Spleen (tissue), 13 donors: ENCODE measurements at regions of chr11 and their contacts with region 1.

Region 1: DNA sequence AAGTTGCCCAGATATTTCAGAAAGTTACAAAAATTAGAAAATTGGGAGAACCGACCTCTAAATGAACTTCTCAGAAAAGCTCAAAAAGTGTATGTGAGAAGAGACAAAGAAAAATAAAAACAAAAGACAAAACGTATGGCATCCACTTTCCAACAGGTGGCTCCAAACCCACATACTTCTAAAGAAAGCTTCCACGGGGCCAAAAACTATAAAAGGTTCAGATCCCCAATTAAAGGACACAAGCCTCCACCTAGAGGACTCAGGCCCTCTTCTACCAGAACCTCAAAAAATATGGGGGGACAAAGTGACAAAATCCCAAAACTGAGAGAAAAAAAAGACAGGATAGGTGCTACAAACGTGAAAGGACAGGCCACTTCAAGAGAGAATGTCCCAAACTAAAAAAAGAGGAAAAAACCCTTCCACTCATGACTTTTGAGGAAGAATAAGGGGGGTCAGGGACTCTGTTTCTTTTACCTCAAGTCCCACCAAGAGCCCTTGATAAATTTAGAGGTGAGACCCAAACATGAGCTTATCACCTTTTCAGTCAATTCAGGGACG is 8.8 kb downstream of the SCGB2A1 start:
- DNase-seq: no peak
- H3K4me3 ChIP-seq: no peak overlapping the region
- H3K27ac ChIP-seq: no peak overlapping the region
- H3K4me1 ChIP-seq: no peaks in the 10 kb centered on the region
- H3K27me3 ChIP-seq: no peaks in the 10 kb centered on the region
- CTCF ChIP-seq: peak in 1 of 11 experiments; percentile 6
- POLR2A ChIP-seq: no peak

Region 2: GRCh38 chr11:62150907-62151736 is 66.1 kb before region 1 on chr11:
- intact Hi-C with region 1: loop called (anchors 10 kb)
- DNase-seq: peak; percentile 23
- H3K4me3 ChIP-seq: no peak overlapping the region
- H3K27ac ChIP-seq: no peak overlapping the region
- H3K4me1 ChIP-seq: no peaks in the 10 kb centered on the region
- H3K27me3 ChIP-seq: no peaks in the 10 kb centered on the region
- CTCF ChIP-seq: no peak
- POLR2A ChIP-seq: no peak

Region 3: DNA sequence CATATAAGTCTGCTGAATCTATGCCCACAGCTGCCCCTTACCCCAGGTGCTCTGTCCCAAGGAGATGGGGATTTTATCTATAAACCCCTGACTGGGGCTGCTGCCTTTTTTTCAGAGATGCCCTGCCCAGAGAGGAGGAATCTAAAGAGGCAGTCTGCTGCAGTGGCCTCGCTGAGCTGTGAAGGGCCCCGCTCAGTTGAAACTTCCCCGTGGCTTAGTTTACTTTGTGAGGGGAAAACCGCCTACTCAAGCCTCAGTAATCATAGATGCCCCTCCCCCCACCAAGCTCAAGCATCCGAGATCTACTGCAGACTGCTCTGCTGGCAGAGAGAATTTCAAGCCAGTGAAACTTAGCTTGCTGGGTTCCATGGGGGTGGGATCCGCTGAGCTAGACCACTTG is 89.0 kb after region 1 on chr11:
- intact Hi-C with region 1: loop called (anchors 10 kb)
- DNase-seq: no peak
- H3K4me3 ChIP-seq: no peak overlapping the region
- H3K27ac ChIP-seq: no peak overlapping the region
- H3K4me1 ChIP-seq: peaks cover 0 to 6% (median 4%) of the 10 kb centered on the region in 6 donors
- H3K27me3 ChIP-seq: peaks cover 0 to 33% (median 0%) of the 10 kb centered on the region in 7 donors
- CTCF ChIP-seq: no peak
- POLR2A ChIP-seq: no peak